ENCODE measurements at regions of chr19 and their contacts with region 1.

Region 1: GRCh38 chr19:46361915-46362314 is 15.0 kb downstream of the PPP5C start:
- DNase-seq: peak in 2 of 9 experiments; percentile 40 to 73
- ATAC-seq: peak; percentile 73
- H3K4me3 ChIP-seq: peak overlapping the region; percentile 17 to 19
- H3K4me3 Mint-ChIP-seq: peak overlapping the region; percentile 69
- H3K27ac ChIP-seq: no peak overlapping the region
- H3K27ac Mint-ChIP-seq: no peak overlapping the region
- H3K4me1 ChIP-seq: peaks cover 16% of the 10 kb centered on the region
- H3K4me1 Mint-ChIP-seq: peaks cover 47% of the 10 kb centered on the region
- H3K27me3 ChIP-seq: no peaks in the 10 kb centered on the region
- H3K27me3 Mint-ChIP-seq: no peaks in the 10 kb centered on the region
- CTCF ChIP-seq: no peak

Region 2: GRCh38 chr19:46303691-46304397 is 58.1 kb before region 1 on chr19:
- CTCF ChIA-PET with region 1: no interaction called
- POLR2A ChIA-PET with region 1: no interaction called
- intact Hi-C with region 1: loop called in 1 of 2 experiments (anchors 10 kb)
- DNase-seq: peak in 2 of 9 experiments; percentile 15 to 16
- ATAC-seq: no peak
- H3K4me3 ChIP-seq: no peak overlapping the region
- H3K4me3 Mint-ChIP-seq: no peak overlapping the region
- H3K27ac ChIP-seq: no peak overlapping the region
- H3K27ac Mint-ChIP-seq: no peak overlapping the region
- H3K4me1 ChIP-seq: no peaks in the 10 kb centered on the region
- H3K4me1 Mint-ChIP-seq: no peaks in the 10 kb centered on the region
- H3K27me3 ChIP-seq: no peaks in the 10 kb centered on the region
- H3K27me3 Mint-ChIP-seq: peaks cover 5% of the 10 kb centered on the region
- CTCF ChIP-seq: no peak

Region 3: DNA sequence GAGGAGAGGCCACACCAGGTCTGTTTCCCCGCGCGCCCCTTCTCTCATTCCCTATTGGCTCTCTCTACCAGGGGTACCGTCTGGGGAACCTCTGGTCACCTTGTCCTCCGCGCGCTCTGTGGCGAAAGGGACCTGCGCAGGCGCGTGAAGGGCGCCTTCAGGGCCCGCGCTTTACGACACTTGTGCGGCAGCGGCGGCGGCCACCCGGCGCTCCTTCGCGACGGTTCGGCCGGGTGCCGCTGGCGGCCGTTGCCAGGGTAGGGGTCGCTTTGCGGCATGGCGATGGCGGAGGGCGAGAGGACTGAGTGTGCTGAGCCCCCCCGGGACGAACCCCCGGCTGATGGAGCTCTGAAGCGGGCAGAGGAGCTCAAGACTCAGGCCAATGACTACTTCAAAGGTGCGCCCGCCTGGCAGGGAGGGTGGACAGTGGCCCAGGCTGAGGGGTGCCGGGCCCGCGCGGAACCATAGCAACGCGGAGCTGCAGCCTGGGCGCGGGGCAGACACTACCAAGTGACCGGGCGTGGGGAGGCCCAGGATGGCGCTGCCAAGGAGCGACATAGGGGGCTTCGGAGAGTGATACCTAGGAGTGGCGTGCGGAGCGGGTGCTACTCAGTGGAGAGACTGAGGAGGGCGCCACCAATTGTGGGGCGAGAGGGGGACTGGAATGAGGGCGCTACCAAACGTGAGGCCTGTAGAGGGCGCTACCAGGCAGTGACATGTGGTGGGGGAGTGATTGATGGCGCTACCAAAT is 14.9 kb before region 1 on chr19 and contains the start of gene PPP5C:
- CTCF ChIA-PET with region 1: no interaction called
- POLR2A ChIA-PET with region 1: interaction called, 4 read pairs
- intact Hi-C with region 1: loop called in 1 of 2 experiments (anchors 1 kb)
- DNase-seq: peak; percentile 63 to 92 (median 84)
- ATAC-seq: peak; percentile 85
- H3K4me3 ChIP-seq: peak within 1 kb of the TSS; percentile 97 to 99
- H3K4me3 Mint-ChIP-seq: peak within 1 kb of the TSS; percentile 95
- H3K27ac ChIP-seq: peak within 1 kb of the TSS; percentile 57 to 86
- H3K27ac Mint-ChIP-seq: peak within 1 kb of the TSS; percentile 92
- H3K4me1 ChIP-seq: peaks cover 51% of the 10 kb centered on the region
- H3K4me1 Mint-ChIP-seq: peaks cover 54% of the 10 kb centered on the region
- H3K27me3 ChIP-seq: no peaks in the 10 kb centered on the region
- H3K27me3 Mint-ChIP-seq: no peaks in the 10 kb centered on the region
- CTCF ChIP-seq: peak; percentile 61
- total RNA-seq, gene PPP5C: 24.6 to 25.7 TPM

Measured in CD8-positive, alpha-beta T cell (primary cell).